Endothelial cell of umbilical vein (primary cell): ENCODE measurements at regions of chr12 and their contacts with region 1.

Region 1: DNA sequence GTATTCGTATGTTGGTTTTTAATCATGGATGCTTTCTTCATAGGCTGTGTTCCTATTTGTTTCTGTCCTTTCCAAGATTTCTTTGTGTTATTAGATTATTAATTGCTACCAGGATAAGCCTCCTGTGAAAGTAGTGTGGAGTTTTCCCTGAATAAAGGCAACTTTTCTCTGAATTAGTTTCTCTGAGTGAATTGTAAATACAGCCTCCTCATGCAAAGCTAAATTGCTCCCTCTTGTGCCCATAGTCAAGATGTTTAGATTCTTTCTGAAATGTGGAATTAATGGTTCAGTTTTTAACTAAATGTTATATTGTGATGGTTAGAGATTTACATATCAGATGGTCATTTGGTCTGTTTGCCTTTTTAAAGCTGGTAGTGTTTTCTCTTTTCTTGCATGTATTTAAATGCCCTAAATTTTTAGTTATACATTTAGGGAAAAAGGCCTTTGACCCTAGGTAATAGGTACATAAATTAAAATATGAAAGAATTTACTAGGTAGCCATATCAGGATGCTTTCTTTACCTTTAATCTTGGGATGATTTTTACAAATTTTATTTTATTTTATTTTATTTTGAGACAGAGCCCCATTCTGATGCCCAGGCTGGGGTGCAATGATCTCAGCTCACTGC is 8.9 kb downstream of the APAF1 start:
- DNase-seq: peak; percentile 66
- H3K4me3 ChIP-seq: no peak overlapping the region
- H3K27ac ChIP-seq: no peak overlapping the region
- H3K4me1 ChIP-seq: peaks cover 4% of the 10 kb centered on the region
- H3K27me3 ChIP-seq: no peaks in the 10 kb centered on the region
- CTCF ChIP-seq: peak; percentile 30 to 36
- POLR2A ChIP-seq: no peak

Region 2: GRCh38 chr12:98606357-98606988 is 47.5 kb before region 1 on chr12:
- CTCF ChIA-PET with region 1: interaction called, 6 read pairs
- POLR2A ChIA-PET with region 1: no interaction called
- dilution Hi-C with region 1: no loop called
- intact Hi-C with region 1: loop called (anchors 1 kb)
- DNase-seq: peak; percentile 16
- H3K4me3 ChIP-seq: no peak overlapping the region
- H3K27ac ChIP-seq: no peak overlapping the region
- H3K4me1 ChIP-seq: no peaks in the 10 kb centered on the region
- H3K27me3 ChIP-seq: no peaks in the 10 kb centered on the region
- CTCF ChIP-seq: no peak
- POLR2A ChIP-seq: no peak